ENCODE measurements at regions of chr5 and their contacts with region 1.

Region 1: GRCh38 chr5:172640822-172641358 is at the start of gene NEURL1B:
- DNase-seq: peak; percentile 43
- ATAC-seq: peak; percentile 95
- H3K4me3 ChIP-seq: peak within 1 kb of the TSS; percentile 85
- H3K27ac ChIP-seq: peak within 1 kb of the TSS; percentile 53; the same call in 1 of the 2 replicates
- H3K4me1 ChIP-seq: peaks cover 5% of the 10 kb centered on the region; the same call in 1 of the 2 replicates
- H3K27me3 ChIP-seq: peaks cover 10% of the 10 kb centered on the region; the same call in 1 of the 2 replicates
- CTCF ChIP-seq: no peak
- POLR2A ChIP-seq: peak; percentile 43; the same call in 1 of the 2 replicates
- RAD21 ChIP-seq: no peak
- total RNA-seq, gene NEURL1B: 1.8 and 1.9 TPM in 2 replicates

Region 2: GRCh38 chr5:172479044-172479783 is 161.7 kb before region 1 on chr5:
- CTCF ChIA-PET with region 1: no interaction called
- POLR2A ChIA-PET with region 1: no interaction called
- dilution Hi-C with region 1: no loop called
- in situ Hi-C with region 1: no loop called
- intact Hi-C with region 1: loop called (anchors 1 kb)
- DNase-seq: peak; percentile 88
- ATAC-seq: peak; percentile 100
- H3K4me3 ChIP-seq: no peak overlapping the region
- H3K27ac ChIP-seq: no peak overlapping the region
- H3K4me1 ChIP-seq: no peaks in the 10 kb centered on the region
- H3K27me3 ChIP-seq: peaks cover 9% of the 10 kb centered on the region
- CTCF ChIP-seq: peak; percentile 98
- POLR2A ChIP-seq: peak; percentile 57
- RAD21 ChIP-seq: peak; percentile 96

Measured in IMR-90 (cell line).